ENCODE measurements at regions of chr6 and their contacts with region 1.

Region 1: GRCh38 chr6:83215131-83216047 is 22.2 kb downstream of the RWDD2A start:
- DNase-seq: peak; percentile 51
- H3K4me3 ChIP-seq: no peak overlapping the region
- H3K27ac ChIP-seq: peak overlapping the region; percentile 85
- H3K27me3 ChIP-seq: no peaks in the 10 kb centered on the region
- CTCF ChIP-seq: peak; percentile 94

Region 2: DNA sequence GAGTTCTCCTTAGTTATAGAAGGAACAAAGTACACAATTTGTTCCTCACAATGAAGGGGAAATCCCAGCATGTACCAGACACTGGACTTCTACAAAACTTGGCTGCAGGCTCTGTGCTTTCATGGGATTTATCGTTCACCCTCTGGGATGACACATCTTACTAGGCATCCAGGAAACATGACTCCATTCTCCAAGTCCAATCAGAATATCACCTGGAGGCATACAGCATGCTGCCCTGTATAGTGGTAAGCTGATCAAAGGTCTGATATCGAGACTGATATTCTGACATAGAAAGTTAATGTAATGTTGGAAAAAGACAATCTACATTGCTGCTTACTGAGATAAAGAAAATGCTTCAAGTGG is 15.5 kb before region 1 on chr6:
- CTCF ChIA-PET with region 1: interaction called, 21 read pairs
- POLR2A ChIA-PET with region 1: no interaction called
- DNase-seq: peak; percentile 47
- H3K4me3 ChIP-seq: no peak overlapping the region
- H3K27ac ChIP-seq: no peak overlapping the region
- H3K27me3 ChIP-seq: no peaks in the 10 kb centered on the region
- CTCF ChIP-seq: no peak

Region 3: DNA sequence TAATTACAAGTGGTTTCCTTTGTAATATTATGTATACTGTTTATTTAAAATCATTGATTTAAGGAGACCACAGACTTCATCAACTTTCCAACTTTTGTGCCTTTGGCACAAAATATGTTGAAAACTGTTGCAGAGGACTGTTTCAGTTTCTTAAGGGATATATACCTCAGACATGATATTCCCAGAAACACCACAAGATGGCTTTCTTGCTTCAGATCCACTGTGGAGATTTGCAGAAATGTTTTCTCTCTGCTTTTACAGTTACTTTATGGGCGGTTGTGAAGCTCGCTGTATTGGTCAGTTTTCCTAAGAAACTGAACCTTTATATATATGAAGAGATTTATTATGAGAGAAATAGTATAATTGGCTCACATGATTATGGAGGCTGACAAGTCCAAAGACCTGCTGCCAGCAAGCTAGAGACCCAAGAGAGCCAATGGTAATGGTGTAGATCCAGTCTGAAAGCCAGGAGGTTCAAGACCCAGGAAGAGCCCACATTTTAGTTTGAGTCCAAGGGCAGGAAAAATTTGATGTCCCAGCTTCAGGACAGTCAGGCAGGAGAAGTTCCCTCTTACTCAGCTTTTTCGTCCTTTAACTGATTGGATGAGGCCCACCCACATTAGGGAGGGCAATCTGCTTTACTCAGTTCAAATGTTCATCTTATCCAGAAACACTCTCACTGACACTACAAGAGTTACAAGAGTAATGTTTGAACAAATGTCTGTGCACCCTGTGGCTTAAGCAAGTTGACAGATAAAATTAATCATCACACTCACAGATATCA is 202.7 kb after region 1 on chr6:
- CTCF ChIA-PET with region 1: interaction called, 11 read pairs
- POLR2A ChIA-PET with region 1: no interaction called
- DNase-seq: peak; percentile 39
- H3K4me3 ChIP-seq: no peak overlapping the region
- H3K27ac ChIP-seq: no peak overlapping the region
- H3K27me3 ChIP-seq: no peaks in the 10 kb centered on the region
- CTCF ChIP-seq: peak; percentile 77